Calu3 (cell line): ENCODE measurements at regions of chr12 and their contacts with region 1.

Region 1: DNA sequence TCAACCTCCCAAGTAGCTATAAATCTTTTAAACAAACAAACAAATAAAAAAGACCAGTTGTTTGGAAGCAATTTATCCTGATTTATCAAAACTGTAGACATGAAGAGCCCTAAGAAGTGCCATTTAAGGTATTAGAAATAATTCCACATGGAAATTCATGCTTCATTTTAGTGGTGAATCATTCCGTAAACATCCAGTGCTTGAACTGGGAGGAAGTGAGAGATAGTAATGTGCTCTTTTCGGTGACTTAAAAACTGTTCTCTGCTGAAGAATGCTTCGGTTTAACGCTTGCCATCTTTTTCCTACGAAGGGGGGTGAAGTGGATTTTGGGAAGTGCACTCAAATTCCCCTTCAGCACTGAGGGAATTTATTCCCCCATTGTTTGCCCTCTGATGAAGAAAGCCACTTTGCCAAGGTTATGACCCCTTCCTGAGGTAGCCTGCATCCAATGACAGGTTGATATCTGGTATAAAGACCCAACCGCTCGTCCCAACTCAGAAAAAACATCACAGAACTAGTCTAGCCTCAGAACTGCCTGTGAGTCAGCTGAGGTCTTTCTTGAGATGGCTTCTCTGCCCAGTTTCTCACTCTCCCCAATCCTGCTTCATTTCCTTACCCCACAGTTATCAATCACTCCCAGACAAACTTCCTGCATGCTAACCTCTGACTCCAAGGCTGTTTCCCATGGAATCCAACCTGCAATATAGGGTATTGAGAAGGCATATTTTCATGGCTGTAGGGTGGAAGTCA is 244.1 kb downstream of the AEBP2 start:
- DNase-seq: no peak
- H3K4me3 Mint-ChIP-seq: peak overlapping the region; percentile 47
- H3K27ac Mint-ChIP-seq: peak overlapping the region; percentile 56
- H3K4me1 Mint-ChIP-seq: peaks cover 13% of the 10 kb centered on the region
- H3K27me3 Mint-ChIP-seq: no peaks in the 10 kb centered on the region
- CTCF ChIP-seq: no peak

Region 2: DNA sequence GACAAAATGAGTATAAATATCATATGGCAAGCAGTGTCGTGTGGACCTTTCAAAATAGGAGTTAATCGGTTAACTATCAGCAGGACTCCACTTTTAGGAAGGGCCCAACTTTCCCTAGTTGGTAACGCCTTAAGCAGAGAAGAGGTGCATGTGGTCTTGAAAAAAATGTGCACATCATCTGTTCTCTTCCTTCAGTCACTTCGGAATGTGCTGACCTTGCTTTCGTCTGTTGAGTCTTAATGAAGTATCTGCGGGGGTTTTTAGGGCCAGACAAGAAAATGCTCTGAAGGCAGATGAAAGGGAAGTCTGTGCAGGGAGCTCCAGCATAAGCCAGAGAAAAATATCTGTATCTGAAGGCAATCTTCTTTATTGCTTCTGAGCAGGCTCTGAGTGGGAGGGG is 58.9 kb before region 1 on chr12:
- CTCF ChIA-PET with region 1: no interaction called
- intact Hi-C with region 1: no loop called
- DNase-seq: no peak
- H3K4me3 Mint-ChIP-seq: no peak overlapping the region
- H3K27ac Mint-ChIP-seq: no peak overlapping the region
- H3K4me1 Mint-ChIP-seq: no peaks in the 10 kb centered on the region
- H3K27me3 Mint-ChIP-seq: no peaks in the 10 kb centered on the region
- CTCF ChIP-seq: no peak

Region 3: DNA sequence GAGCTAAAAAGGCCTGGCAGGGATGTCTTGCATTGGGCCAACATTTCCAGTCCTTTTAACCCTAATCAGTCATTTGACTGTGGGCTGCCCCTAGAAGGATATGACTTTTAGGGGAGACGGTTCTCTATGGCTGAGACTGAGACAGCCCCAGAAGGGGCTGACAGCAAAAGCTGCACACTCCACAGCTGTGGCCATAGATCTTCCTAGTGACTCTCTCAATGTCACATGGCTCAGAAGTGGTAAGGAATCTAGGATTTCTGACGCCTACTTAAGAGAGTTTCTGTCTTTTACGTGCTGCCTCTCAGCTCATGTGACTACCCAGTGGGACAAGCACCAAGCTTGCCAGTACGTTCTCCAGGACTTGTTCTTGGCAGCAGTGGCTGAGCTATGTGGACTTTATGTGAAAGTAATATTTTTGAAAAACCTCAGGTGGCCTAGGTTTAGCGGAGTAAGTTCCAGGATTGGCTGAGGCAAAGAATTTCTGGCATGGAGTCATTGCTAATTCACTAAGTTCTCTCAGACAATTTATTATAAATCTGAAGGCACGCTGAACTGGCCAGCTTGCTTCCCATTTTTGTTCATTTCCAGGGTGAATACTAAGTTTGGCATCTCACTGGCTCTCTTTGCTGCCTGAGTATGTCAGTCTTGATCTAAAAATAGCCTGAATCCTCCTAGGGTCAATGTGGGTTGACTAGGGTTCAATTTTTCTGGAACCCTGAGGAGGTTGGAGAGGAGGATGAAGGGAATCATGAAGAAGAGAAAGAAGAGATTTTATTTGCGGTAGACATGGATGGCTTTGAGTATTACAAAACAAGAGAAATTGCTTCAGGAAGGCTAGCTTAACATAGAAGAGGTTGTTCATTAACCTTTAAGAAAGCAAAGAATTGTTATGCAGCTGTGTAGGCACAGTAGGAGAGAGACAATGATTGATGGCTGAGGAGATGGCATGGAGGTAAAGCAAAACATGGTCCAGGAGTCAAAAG is 27.7 kb after region 1 on chr12:
- CTCF ChIA-PET with region 1: no interaction called
- intact Hi-C with region 1: loop called (anchors 2 kb)
- DNase-seq: no peak
- H3K4me3 Mint-ChIP-seq: peak overlapping the region; percentile 4
- H3K27ac Mint-ChIP-seq: peak overlapping the region; percentile 35
- H3K4me1 Mint-ChIP-seq: peaks cover 32% of the 10 kb centered on the region
- H3K27me3 Mint-ChIP-seq: no peaks in the 10 kb centered on the region
- CTCF ChIP-seq: no peak